Body of pancreas (tissue), 4 donors: ENCODE measurements at regions of chr7 and their contacts with region 1.

Region 1: DNA sequence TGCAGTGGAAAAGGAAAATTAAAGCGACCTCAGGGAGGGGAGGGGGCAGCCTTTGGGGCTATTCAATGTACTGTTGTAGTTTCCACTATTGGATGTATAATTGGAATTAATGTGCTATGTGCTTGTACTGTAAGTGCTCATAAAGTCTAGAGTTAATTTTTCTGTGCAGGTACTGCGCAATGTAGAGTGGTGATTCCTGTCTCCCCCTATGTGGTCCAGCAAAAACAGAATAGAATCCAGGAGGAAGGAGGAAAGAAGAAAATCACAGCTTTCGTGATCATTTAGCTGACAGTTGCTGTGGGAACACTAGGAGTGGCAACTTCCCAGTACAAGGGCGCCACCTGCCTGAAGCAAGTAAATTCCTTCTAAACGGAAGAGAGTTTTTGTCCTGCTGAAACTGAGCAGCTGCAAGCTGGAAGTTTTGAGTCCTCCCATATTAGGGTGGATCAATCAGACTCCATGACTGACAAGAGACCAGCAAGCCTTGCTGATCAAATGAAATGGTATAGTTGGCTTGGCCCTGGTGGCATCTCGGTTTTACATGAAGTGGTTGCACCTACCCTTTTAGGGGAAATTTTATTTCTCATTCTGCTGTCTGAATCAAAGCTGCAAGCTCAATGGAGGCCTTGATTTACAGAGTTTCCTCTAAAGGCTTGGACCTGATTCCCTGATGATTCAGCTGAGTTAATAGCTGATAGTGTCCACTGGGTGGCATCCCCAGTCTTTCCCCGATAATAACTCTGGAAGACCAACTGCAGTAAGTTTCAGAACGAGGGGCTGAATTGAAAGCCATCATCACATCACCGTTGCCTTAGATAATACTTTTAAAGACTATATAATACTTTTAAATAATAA is 299.8 kb downstream of the HGF start:
- DNase-seq: peak; percentile 77 to 83 (median 79)
- ATAC-seq: peak; percentile 88
- H3K4me3 ChIP-seq: no peak overlapping the region
- H3K27ac ChIP-seq: peak overlapping the region in 2 of 4 donors; percentile 13 to 40
- H3K4me1 ChIP-seq: peaks cover 15% of the 10 kb centered on the region
- H3K27me3 ChIP-seq: no peaks in the 10 kb centered on the region
- CTCF ChIP-seq: peak; percentile 47 to 81 (median 76)
- POLR2A ChIP-seq: no peak

Region 2: GRCh38 chr7:80699721-80700256 is 770.3 kb before region 1 on chr7:
- intact Hi-C with region 1: loop called (anchors 5 kb)
- DNase-seq: no peak
- ATAC-seq: no peak
- H3K4me3 ChIP-seq: no peak overlapping the region
- H3K27ac ChIP-seq: no peak overlapping the region
- H3K4me1 ChIP-seq: no peaks in the 10 kb centered on the region
- H3K27me3 ChIP-seq: no peaks in the 10 kb centered on the region
- CTCF ChIP-seq: no peak
- POLR2A ChIP-seq: no peak

Region 3: GRCh38 chr7:81430150-81430549 is 39.9 kb before region 1 on chr7:
- intact Hi-C with region 1: no loop called
- DNase-seq: no peak
- ATAC-seq: no peak
- H3K4me3 ChIP-seq: no peak overlapping the region
- H3K27ac ChIP-seq: no peak overlapping the region
- H3K4me1 ChIP-seq: no peaks in the 10 kb centered on the region
- H3K27me3 ChIP-seq: no peaks in the 10 kb centered on the region
- CTCF ChIP-seq: no peak
- POLR2A ChIP-seq: no peak